ENCODE measurements at regions of chr10 and their contacts with region 1.

Region 1: GRCh38 chr10:132788180-132788830 is 2.4 kb upstream of the NKX6-2 start:
- DNase-seq: peak; percentile 49 to 70
- H3K4me3 ChIP-seq: peak overlapping the region; percentile 24 to 48 (median 29)
- H3K27ac ChIP-seq: no peak overlapping the region
- H3K4me1 ChIP-seq: peaks cover 27 to 48% (median 39%) of the 10 kb centered on the region in 4 donors
- H3K27me3 ChIP-seq: peaks cover 51 to 92% (median 61%) of the 10 kb centered on the region in 3 donors
- CTCF ChIP-seq: peak in 1 of 7 experiments; percentile 14
- EP300 ChIP-seq: no peak
- POLR2A ChIP-seq: no peak

Region 2: DNA sequence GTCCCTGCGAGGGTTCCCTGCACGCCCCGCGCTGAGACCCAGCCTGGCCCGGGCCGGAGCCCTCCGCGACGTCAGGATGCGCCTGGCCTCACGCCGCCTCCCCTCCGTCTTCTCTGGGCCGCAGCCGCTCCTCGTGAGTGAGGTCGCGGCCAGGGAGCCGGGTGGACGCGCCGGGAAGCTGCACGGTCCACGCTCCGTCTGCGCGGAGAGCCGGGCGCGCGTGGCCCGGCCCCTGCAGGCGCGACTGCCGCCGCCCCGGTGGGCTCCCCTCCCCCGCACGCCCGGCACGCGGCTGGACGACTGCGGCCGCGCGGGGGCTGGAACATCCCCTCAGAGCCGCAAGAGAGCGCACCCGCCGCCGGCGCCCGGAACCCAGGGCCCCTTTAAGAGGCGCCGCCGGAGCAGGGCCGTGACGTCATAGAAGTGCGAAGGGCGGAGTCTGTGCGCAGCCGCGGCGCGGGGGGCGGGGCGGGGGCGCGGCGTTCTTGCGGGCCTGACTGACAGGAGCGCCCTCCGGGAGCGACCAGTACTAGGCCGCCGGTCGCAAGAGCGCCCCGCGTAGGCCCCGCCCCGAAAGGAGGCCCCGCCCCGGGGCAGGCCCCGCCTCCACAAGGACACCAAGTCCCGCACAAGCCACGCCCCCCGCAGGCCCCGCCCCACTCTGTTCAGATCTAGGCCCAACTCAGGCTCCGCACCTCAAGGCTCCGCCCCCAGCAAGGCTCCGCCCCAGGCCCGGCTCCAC is 251.2 kb before region 1 on chr10:
- intact Hi-C with region 1: no loop called
- DNase-seq: peak; percentile 100
- H3K4me3 ChIP-seq: peak overlapping the region; percentile 75 to 80 (median 78)
- H3K27ac ChIP-seq: peak overlapping the region; percentile 87 to 96 (median 92)
- H3K4me1 ChIP-seq: peaks cover 49 to 59% (median 55%) of the 10 kb centered on the region in 4 donors
- H3K27me3 ChIP-seq: no peaks in the 10 kb centered on the region
- CTCF ChIP-seq: peak in 2 of 7 experiments; percentile 34 to 40
- EP300 ChIP-seq: no peak
- POLR2A ChIP-seq: no peak

Region 3: DNA sequence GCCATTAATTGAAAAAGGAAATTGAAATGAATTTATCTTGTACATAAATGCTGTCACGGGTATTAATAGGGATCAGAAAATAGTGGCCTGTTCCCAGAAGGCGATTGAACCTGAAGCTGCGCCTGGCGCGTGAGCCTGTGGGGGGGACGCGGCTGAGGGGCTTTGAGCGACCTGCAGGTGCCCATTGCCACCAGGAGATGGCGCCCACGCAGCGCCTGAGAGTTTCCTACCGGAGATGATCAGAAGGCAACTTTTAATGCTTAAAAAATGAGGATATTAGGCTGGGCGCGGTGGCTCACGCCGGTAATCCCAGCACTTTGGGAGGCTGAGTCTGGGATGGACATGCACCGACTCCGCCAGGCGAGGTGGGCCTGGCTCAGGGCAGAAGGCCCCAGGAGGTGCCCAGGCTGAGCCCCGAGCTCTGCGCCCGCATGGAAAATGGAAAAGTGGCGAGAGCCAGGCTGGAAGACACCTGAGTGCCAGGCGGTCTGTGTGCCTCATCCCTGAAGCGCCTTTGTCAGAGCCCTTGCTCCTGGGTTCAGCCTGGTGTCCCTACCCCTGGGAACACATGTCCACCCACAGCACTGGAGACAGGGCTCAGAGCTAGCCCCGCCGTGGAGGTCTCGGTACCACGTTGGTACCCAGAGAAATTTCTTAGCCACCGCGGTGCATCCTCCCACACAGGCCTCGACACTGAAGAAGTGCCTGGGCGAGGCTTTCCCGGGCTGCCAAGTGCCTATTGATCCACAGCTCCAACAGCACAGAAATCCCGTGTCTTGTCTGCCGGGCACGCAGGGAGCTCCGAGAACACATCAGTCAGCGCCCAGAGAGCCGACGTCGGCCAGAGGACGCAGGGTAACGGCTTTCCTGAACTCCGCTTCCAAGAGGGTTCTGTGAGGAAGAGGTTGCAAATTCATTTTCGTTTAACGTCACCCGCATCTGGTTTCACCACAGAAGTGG is 133.3 kb before region 1 on chr10:
- intact Hi-C with region 1: loop called (anchors 10 kb)
- DNase-seq: peak; percentile 69 to 88
- H3K4me3 ChIP-seq: no peak overlapping the region
- H3K27ac ChIP-seq: no peak overlapping the region
- H3K4me1 ChIP-seq: peaks cover 0 to 16% (median 4%) of the 10 kb centered on the region in 4 donors
- H3K27me3 ChIP-seq: no peaks in the 10 kb centered on the region
- CTCF ChIP-seq: peak in 6 of 7 experiments; percentile 34 to 95 (median 88)
- EP300 ChIP-seq: no peak
- POLR2A ChIP-seq: no peak

Region 4: GRCh38 chr10:132879408-132880127 is 91.3 kb after region 1 on chr10:
- intact Hi-C with region 1: no loop called
- DNase-seq: peak in 1 of 2 donors; percentile 24
- H3K4me3 ChIP-seq: no peak overlapping the region
- H3K27ac ChIP-seq: no peak overlapping the region
- H3K4me1 ChIP-seq: peaks cover 0 to 6% (median 0%) of the 10 kb centered on the region in 4 donors
- H3K27me3 ChIP-seq: peaks cover 0 to 60% (median 7%) of the 10 kb centered on the region in 3 donors
- CTCF ChIP-seq: no peak
- EP300 ChIP-seq: no peak
- POLR2A ChIP-seq: no peak